Activated CD8-positive, alpha-beta memory T cell treated with anti-CD3 and anti-CD28 coated beads, Interleukin-2, amount 10 ng/mL, durations not matched to agents 7 days and 5 days (primary cell): ENCODE measurements at regions of chr13 and their contacts with region 1.

Region 1: DNA sequence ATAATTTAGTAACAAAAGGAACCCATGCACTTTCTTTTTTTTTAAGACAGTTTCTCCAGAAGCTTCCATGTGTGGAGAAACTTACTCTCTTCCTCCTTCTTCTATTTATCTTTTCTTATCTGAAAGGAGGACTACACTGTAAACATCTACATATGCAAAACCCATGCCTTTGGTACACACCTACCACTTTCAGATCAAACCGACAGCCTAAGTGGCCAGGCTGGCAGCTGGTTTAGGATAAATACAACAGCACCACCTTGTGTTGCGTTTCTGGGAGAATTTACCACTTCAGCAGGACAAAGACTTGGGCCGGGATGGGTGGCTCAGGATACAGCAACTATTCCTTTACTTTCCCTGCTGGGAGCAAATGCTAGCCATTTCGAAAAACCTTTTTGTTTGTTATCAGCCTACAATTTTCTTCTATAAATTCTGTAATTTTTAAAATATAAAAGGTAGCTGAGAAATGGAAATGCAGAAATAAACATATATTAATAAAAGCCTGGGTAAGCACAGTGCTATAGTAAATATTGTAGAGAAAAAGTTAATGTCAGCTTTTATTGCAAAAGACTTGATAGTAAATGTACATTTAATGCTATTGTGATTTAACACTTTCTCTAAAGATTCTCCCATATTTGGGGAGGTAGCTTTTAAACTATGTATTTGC is 94.0 kb upstream of the RFC3 start:
- DNase-seq: peak; percentile 86
- ATAC-seq: peak; percentile 97
- H3K4me3 Mint-ChIP-seq: no peak overlapping the region
- H3K27ac Mint-ChIP-seq: peak overlapping the region; percentile 60
- H3K4me1 Mint-ChIP-seq: peaks cover 28% of the 10 kb centered on the region
- H3K27me3 Mint-ChIP-seq: no peaks in the 10 kb centered on the region

Region 2: GRCh38 chr13:33228648-33229445 is 495.1 kb before region 1 on chr13:
- CTCF ChIA-PET with region 1: interaction called, 21 read pairs
- DNase-seq: no peak
- ATAC-seq: no peak
- H3K4me3 Mint-ChIP-seq: no peak overlapping the region
- H3K27ac Mint-ChIP-seq: no peak overlapping the region
- H3K4me1 Mint-ChIP-seq: peaks cover 3% of the 10 kb centered on the region
- H3K27me3 Mint-ChIP-seq: no peaks in the 10 kb centered on the region

Region 3: GRCh38 chr13:33542283-33543088 is 181.4 kb before region 1 on chr13:
- CTCF ChIA-PET with region 1: interaction called, 34 read pairs
- DNase-seq: peak; percentile 98
- ATAC-seq: peak; percentile 87
- H3K4me3 Mint-ChIP-seq: peak overlapping the region; percentile 80
- H3K27ac Mint-ChIP-seq: peak overlapping the region; percentile 97
- H3K4me1 Mint-ChIP-seq: peaks cover 32% of the 10 kb centered on the region
- H3K27me3 Mint-ChIP-seq: no peaks in the 10 kb centered on the region

Region 4: GRCh38 chr13:33554919-33555791 is 168.7 kb before region 1 on chr13:
- CTCF ChIA-PET with region 1: no interaction called
- DNase-seq: no peak
- ATAC-seq: no peak
- H3K4me3 Mint-ChIP-seq: no peak overlapping the region
- H3K27ac Mint-ChIP-seq: no peak overlapping the region
- H3K4me1 Mint-ChIP-seq: peaks cover 11% of the 10 kb centered on the region
- H3K27me3 Mint-ChIP-seq: no peaks in the 10 kb centered on the region

Region 5: GRCh38 chr13:33678906-33679657 is 44.8 kb before region 1 on chr13:
- CTCF ChIA-PET with region 1: interaction called, 11 read pairs
- DNase-seq: peak; percentile 89
- ATAC-seq: peak; percentile 87
- H3K4me3 Mint-ChIP-seq: peak overlapping the region; percentile 88
- H3K27ac Mint-ChIP-seq: peak overlapping the region; percentile 100
- H3K4me1 Mint-ChIP-seq: peaks cover 55% of the 10 kb centered on the region
- H3K27me3 Mint-ChIP-seq: no peaks in the 10 kb centered on the region